MCF 10A (cell line): ENCODE measurements at regions of chr7 and their contacts with region 1.

Region 1: DNA sequence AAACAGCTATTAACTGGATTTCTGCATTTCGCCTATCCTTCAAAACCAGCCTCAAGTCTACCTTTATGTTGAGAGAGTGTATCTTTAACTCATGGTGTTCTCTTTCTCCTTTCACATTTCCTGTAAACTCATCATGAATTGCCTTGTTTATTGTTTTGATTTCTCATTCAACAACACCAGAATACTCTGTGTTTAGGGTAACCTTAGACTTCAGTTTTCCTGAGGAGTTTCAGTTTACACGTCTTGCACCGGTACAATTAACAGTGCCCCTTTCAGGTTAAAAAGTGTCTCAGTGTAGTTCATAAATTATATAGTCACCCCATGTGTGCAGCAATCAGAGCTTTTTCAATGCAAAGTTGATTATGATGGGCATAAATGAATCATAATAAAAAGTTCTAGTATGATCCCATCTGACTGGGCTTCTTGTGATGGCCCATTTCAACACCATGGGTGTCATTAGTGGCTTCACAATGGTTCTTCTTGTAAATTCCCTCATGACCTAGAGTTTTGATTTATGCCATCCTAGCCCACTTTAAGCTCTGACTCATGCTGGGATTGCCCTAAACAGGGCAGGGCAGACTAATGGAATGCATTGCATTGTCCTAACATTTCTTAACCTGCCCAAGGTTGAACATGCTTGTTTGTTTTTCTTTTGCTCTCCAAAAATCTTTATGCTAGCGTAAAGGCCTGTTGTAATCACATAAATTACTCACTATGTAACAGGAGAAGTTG is 22.0 kb downstream of the ITGB8 start:
- DNase-seq: peak; percentile 99
- H3K4me3 Mint-ChIP-seq: peak overlapping the region; percentile 61
- H3K27ac Mint-ChIP-seq: peak overlapping the region; percentile 97
- H3K4me1 Mint-ChIP-seq: peaks cover 54% of the 10 kb centered on the region
- H3K27me3 Mint-ChIP-seq: no peaks in the 10 kb centered on the region
- CTCF ChIP-seq: no peak

Region 2: DNA sequence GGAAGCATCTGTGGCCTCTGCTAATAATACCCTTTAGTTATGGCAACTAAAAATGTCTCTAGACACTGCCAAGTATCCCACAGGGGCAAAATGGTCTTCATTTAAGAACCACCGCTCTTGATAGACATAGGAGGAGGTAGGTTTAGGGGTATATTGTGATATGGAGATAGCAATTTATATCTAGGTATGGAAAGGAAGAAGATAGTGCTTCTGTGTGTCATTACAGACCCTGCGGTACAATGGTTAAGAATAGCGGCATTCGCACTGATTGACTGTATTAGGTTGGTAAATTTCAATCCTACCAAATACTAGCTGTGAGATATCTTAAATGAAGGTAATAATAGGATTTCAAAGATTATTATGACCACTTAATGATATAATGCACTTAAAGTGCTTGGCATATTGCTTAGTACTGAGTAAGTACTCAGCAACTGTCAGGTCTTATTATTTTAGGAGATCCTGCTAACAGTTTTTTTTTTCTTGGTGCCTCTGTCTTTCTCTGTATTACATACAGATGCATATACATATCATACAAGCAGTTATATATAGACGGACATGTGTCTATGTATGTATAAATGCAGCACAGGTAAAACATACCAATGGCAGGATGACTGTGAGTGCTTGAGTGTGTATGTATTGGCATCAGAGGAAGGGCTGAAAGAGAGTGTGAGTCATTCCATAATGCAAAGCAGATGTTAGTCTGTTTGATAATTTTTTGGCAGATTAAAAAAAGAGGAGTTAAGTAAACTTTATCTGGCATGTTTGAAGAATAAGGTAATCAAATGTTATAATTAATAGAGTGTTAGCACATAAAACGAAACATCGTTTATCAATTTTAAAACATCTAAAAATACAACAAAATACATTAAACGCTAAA is 72.0 kb before region 1 on chr7:
- CTCF ChIA-PET with region 1: no interaction called
- POLR2A ChIA-PET with region 1: no interaction called
- intact Hi-C with region 1: no loop called
- DNase-seq: peak; percentile 14
- H3K4me3 Mint-ChIP-seq: no peak overlapping the region
- H3K27ac Mint-ChIP-seq: no peak overlapping the region
- H3K4me1 Mint-ChIP-seq: peaks cover 12% of the 10 kb centered on the region
- H3K27me3 Mint-ChIP-seq: no peaks in the 10 kb centered on the region
- CTCF ChIP-seq: no peak

Region 3: DNA sequence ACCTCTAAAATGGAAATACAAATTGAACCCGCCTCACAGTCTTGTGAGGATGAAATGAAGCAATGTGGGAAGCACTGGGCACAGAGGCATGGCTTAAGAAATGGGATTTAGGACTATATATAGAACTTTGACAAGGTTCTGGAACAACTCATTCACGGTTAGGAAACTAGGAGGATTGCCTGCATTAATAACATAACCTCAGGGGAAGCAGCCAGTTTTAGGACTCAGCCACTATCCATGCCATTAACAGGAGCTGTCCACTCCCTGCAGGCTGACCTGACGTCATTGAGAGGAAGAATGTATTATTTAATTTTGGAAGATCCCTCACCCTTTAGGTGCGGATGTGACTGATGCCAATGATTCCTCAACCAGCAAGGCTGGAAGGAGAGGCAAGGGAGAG is 12.7 kb after region 1 on chr7:
- CTCF ChIA-PET with region 1: interaction called, 3 read pairs
- POLR2A ChIA-PET with region 1: interaction called, 36 read pairs
- intact Hi-C with region 1: loop called (anchors 1 kb)
- DNase-seq: peak; percentile 97
- H3K4me3 Mint-ChIP-seq: no peak overlapping the region
- H3K27ac Mint-ChIP-seq: peak overlapping the region; percentile 92
- H3K4me1 Mint-ChIP-seq: peaks cover 43% of the 10 kb centered on the region
- H3K27me3 Mint-ChIP-seq: no peaks in the 10 kb centered on the region
- CTCF ChIP-seq: no peak

Region 4: DNA sequence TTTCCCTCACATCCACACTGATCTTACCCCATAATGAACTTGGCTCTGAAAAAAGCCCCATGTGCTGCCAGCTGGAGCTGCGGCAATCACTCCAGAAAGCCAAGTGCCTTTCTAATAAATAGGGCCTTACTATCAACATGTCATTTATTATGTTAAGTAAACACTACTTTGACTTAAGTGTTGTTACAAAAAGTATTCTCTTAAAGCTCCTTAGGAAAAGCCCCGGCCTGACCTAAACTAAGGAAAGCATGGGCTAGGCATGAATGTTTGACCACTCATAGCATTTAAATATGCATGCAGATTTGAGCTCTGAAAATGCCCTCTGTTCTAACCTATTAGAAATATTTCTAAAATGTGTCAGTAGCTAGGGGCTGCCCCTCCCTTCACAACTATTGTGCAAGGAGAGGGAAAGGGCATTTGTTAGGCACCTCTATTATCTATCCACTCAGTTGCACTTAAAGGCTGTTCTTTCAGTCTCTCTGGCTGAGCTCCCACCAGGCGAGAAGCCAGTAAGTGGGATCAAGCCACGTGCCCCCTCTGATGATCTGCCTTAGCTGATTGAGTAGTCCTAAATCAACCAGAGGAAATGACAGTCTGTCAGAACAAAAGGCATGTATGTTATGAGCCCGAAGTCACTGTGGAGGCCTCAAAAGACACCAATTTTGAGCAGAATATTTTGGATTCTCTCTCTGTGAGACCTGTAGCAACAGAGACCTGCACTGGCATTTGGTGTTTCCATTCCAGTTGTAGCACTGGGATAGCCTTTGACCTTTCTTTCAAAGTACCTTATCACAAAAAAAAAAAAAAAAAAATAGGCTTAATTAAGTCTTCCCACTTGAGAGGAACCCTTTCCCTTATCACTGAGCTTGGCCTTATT is 55.1 kb after region 1 on chr7:
- CTCF ChIA-PET with region 1: interaction called, 3 read pairs
- POLR2A ChIA-PET with region 1: interaction called, 35 read pairs
- intact Hi-C with region 1: no loop called
- DNase-seq: peak; percentile 84
- H3K4me3 Mint-ChIP-seq: peak overlapping the region; percentile 19
- H3K27ac Mint-ChIP-seq: peak overlapping the region; percentile 90
- H3K4me1 Mint-ChIP-seq: peaks cover 23% of the 10 kb centered on the region
- H3K27me3 Mint-ChIP-seq: no peaks in the 10 kb centered on the region
- CTCF ChIP-seq: no peak